ENCODE measurements at regions of chr13 and their contacts with region 1.

Region 1: GRCh38 chr13:112942689-112943308 is 26.2 kb upstream of the MCF2L start:
- DNase-seq: peak; percentile 89 to 98 (median 96)
- ATAC-seq: peak; percentile 99
- H3K4me3 ChIP-seq: peak overlapping the region; percentile 45 to 47
- H3K4me3 Mint-ChIP-seq: peak overlapping the region; percentile 89
- H3K27ac ChIP-seq: no peak overlapping the region
- H3K27ac Mint-ChIP-seq: no peak overlapping the region
- H3K4me1 ChIP-seq: peaks cover 9% of the 10 kb centered on the region
- H3K4me1 Mint-ChIP-seq: peaks cover 8% of the 10 kb centered on the region
- H3K27me3 ChIP-seq: peaks cover 0 to 12% of the 10 kb centered on the region in 2 experiments
- H3K27me3 Mint-ChIP-seq: peaks cover 24% of the 10 kb centered on the region
- CTCF ChIP-seq: peak; percentile 98

Region 2: GRCh38 chr13:112783135-112783977 is 159.4 kb before region 1 on chr13:
- CTCF ChIA-PET with region 1: no interaction called
- POLR2A ChIA-PET with region 1: no interaction called
- intact Hi-C with region 1: no loop called
- DNase-seq: peak in 1 of 9 experiments; percentile 42
- ATAC-seq: no peak
- H3K4me3 ChIP-seq: no peak overlapping the region
- H3K4me3 Mint-ChIP-seq: no peak overlapping the region
- H3K27ac ChIP-seq: no peak overlapping the region
- H3K27ac Mint-ChIP-seq: no peak overlapping the region
- H3K4me1 ChIP-seq: no peaks in the 10 kb centered on the region
- H3K4me1 Mint-ChIP-seq: peaks cover 8% of the 10 kb centered on the region
- H3K27me3 ChIP-seq: no peaks in the 10 kb centered on the region
- H3K27me3 Mint-ChIP-seq: no peaks in the 10 kb centered on the region
- CTCF ChIP-seq: no peak

Region 3: GRCh38 chr13:112893570-112894422 is 49.0 kb before region 1 on chr13:
- CTCF ChIA-PET with region 1: no interaction called
- POLR2A ChIA-PET with region 1: no interaction called
- intact Hi-C with region 1: no loop called
- DNase-seq: peak in 3 of 9 experiments; percentile 33 to 59 (median 45)
- ATAC-seq: peak; percentile 75
- H3K4me3 ChIP-seq: no peak overlapping the region
- H3K4me3 Mint-ChIP-seq: peak overlapping the region; percentile 43
- H3K27ac ChIP-seq: no peak overlapping the region
- H3K27ac Mint-ChIP-seq: no peak overlapping the region
- H3K4me1 ChIP-seq: peaks cover 20% of the 10 kb centered on the region
- H3K4me1 Mint-ChIP-seq: peaks cover 8% of the 10 kb centered on the region
- H3K27me3 ChIP-seq: peaks cover 0 to 17% of the 10 kb centered on the region in 2 experiments
- H3K27me3 Mint-ChIP-seq: peaks cover 5% of the 10 kb centered on the region
- CTCF ChIP-seq: no peak

Region 4: GRCh38 chr13:112968908-112969691 is 26.3 kb after region 1 on chr13 and contains the start of gene MCF2L:
- CTCF ChIA-PET with region 1: interaction called, 10 read pairs
- POLR2A ChIA-PET with region 1: no interaction called
- intact Hi-C with region 1: loop called (anchors 1 kb)
- DNase-seq: peak; percentile 31 to 83 (median 69)
- ATAC-seq: peak; percentile 75
- H3K4me3 ChIP-seq: peak within 1 kb of the TSS; percentile 63 to 66
- H3K4me3 Mint-ChIP-seq: peak within 1 kb of the TSS; percentile 96
- H3K27ac ChIP-seq: peak within 1 kb of the TSS; percentile 53 to 69
- H3K27ac Mint-ChIP-seq: peak within 1 kb of the TSS; percentile 95
- H3K4me1 ChIP-seq: peaks cover 23% of the 10 kb centered on the region
- H3K4me1 Mint-ChIP-seq: peaks cover 41% of the 10 kb centered on the region
- H3K27me3 ChIP-seq: no peaks in the 10 kb centered on the region
- H3K27me3 Mint-ChIP-seq: no peaks in the 10 kb centered on the region
- CTCF ChIP-seq: no peak
- total RNA-seq, gene MCF2L: 13.7 to 15.0 TPM

Region 5: DNA sequence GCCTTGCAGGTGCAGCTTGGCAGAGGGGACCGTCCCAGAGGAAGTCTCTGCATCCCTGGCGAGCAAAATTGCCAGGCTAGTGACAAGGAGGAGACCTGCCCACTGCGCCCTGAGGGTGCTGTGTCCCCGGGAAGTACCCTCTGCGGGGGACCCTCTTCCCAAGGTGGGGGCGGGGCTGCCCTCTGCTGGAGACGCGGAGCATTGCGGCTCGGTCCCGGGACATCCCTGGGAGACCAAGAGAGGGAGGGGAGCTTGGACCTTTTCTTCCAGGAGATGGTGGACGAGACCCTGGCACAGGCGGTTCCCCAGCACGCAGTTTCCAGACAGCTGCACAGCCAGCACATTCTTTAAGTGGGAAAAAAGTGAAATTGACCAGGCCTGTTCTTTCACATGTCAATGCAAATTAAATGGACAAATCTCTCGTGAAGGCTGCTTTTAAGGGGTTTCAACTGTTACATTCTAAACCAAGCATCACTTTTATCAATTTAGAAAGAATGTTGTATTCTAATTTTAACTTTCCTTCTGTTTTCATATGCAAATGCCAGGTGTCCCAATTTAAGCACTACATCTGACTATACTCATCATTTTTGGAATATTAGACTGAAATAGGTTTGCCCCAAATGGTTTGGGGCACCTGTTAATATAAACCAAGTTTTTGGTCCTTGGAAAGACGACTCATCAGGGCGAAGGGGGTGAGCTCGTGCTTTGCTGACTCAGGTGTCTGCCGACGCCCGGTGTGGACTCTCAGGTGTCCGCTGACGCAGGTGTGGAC is 86.9 kb after region 1 on chr13:
- CTCF ChIA-PET with region 1: interaction called, 38 read pairs
- POLR2A ChIA-PET with region 1: no interaction called
- intact Hi-C with region 1: loop called in 1 of 2 experiments (anchors 1 kb)
- DNase-seq: peak in 8 of 9 experiments; percentile 32 to 72 (median 57)
- ATAC-seq: peak; percentile 65
- H3K4me3 ChIP-seq: no peak overlapping the region
- H3K4me3 Mint-ChIP-seq: no peak overlapping the region
- H3K27ac ChIP-seq: no peak overlapping the region
- H3K27ac Mint-ChIP-seq: no peak overlapping the region
- H3K4me1 ChIP-seq: no peaks in the 10 kb centered on the region
- H3K4me1 Mint-ChIP-seq: no peaks in the 10 kb centered on the region
- H3K27me3 ChIP-seq: no peaks in the 10 kb centered on the region
- H3K27me3 Mint-ChIP-seq: no peaks in the 10 kb centered on the region
- CTCF ChIP-seq: peak; percentile 86

Region 6: GRCh38 chr13:113153810-113154748 is 211.3 kb after region 1 on chr13:
- CTCF ChIA-PET with region 1: no interaction called
- POLR2A ChIA-PET with region 1: no interaction called
- intact Hi-C with region 1: loop called in 1 of 2 experiments (anchors 5 kb)
- DNase-seq: peak; percentile 51 to 88 (median 75)
- ATAC-seq: peak; percentile 84
- H3K4me3 ChIP-seq: peak overlapping the region; percentile 52 to 56
- H3K4me3 Mint-ChIP-seq: peak overlapping the region; percentile 83
- H3K27ac ChIP-seq: peak overlapping the region; percentile 19 to 72
- H3K27ac Mint-ChIP-seq: peak overlapping the region; percentile 78
- H3K4me1 ChIP-seq: peaks cover 21% of the 10 kb centered on the region
- H3K4me1 Mint-ChIP-seq: peaks cover 17% of the 10 kb centered on the region
- H3K27me3 ChIP-seq: peaks cover 0 to 6% of the 10 kb centered on the region in 2 experiments
- H3K27me3 Mint-ChIP-seq: peaks cover 4% of the 10 kb centered on the region
- CTCF ChIP-seq: no peak

Region 7: GRCh38 chr13:113393563-113394338 is 451.0 kb after region 1 on chr13:
- CTCF ChIA-PET with region 1: interaction called, 7 read pairs
- POLR2A ChIA-PET with region 1: no interaction called
- intact Hi-C with region 1: loop called (anchors 1 kb)
- DNase-seq: peak; percentile 66 to 88 (median 81)
- ATAC-seq: peak; percentile 96
- H3K4me3 ChIP-seq: peak overlapping the region; percentile 61 to 67
- H3K4me3 Mint-ChIP-seq: peak overlapping the region; percentile 87
- H3K27ac ChIP-seq: no peak overlapping the region
- H3K27ac Mint-ChIP-seq: peak overlapping the region; percentile 72
- H3K4me1 ChIP-seq: peaks cover 8% of the 10 kb centered on the region
- H3K4me1 Mint-ChIP-seq: peaks cover 3% of the 10 kb centered on the region
- H3K27me3 ChIP-seq: no peaks in the 10 kb centered on the region
- H3K27me3 Mint-ChIP-seq: no peaks in the 10 kb centered on the region
- CTCF ChIP-seq: peak; percentile 77

Region 8: DNA sequence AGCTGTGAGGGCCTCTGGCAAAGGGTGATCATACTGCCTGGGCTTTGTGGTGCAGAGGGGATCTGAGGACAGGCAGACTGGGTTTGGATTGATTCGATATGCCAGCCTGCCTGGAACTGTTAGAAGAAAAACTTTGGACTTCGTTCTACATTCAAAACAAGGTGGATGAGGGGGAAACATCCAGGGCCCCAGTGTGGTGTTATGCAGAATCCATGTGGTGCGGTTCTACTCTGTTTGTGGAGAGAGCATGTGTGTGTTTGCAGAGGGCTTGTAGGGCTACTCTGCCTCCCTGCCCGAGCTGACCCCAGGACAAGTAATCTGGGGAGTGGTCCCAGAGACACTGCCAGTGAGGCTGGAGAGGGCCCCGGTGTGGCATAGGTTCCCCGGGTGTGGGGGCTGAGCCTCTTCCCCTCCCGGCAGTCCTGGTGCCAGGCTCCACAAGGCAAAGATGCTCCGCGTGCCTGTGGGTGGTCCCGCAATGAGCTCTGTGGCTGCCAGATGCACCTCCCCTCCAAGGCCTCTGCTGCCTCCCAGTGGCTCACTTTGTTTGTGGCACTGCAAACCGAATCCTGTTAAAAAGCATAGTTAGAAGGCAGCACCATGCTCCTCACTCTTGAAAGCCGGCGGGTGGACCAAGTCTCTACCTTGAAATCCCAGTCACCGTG is 619.4 kb after region 1 on chr13:
- CTCF ChIA-PET with region 1: interaction called, 4 read pairs
- POLR2A ChIA-PET with region 1: no interaction called
- intact Hi-C with region 1: loop called in 1 of 2 experiments (anchors 2 kb)
- DNase-seq: peak; percentile 17 to 63 (median 49)
- ATAC-seq: peak; percentile 72
- H3K4me3 ChIP-seq: no peak overlapping the region
- H3K4me3 Mint-ChIP-seq: no peak overlapping the region
- H3K27ac ChIP-seq: no peak overlapping the region
- H3K27ac Mint-ChIP-seq: no peak overlapping the region
- H3K4me1 ChIP-seq: no peaks in the 10 kb centered on the region
- H3K4me1 Mint-ChIP-seq: peaks cover 3% of the 10 kb centered on the region
- H3K27me3 ChIP-seq: no peaks in the 10 kb centered on the region
- H3K27me3 Mint-ChIP-seq: peaks cover 7% of the 10 kb centered on the region
- CTCF ChIP-seq: peak; percentile 56

Region 9: GRCh38 chr13:113981201-113981605 is 1038.4 kb after region 1 on chr13:
- CTCF ChIA-PET with region 1: no interaction called
- POLR2A ChIA-PET with region 1: no interaction called
- intact Hi-C with region 1: no loop called
- DNase-seq: peak in 1 of 9 experiments; percentile 14
- ATAC-seq: no peak
- H3K4me3 ChIP-seq: no peak overlapping the region
- H3K4me3 Mint-ChIP-seq: no peak overlapping the region
- H3K27ac ChIP-seq: no peak overlapping the region
- H3K27ac Mint-ChIP-seq: no peak overlapping the region
- H3K4me1 ChIP-seq: no peaks in the 10 kb centered on the region
- H3K4me1 Mint-ChIP-seq: no peaks in the 10 kb centered on the region
- H3K27me3 ChIP-seq: no peaks in the 10 kb centered on the region
- H3K27me3 Mint-ChIP-seq: no peaks in the 10 kb centered on the region
- CTCF ChIP-seq: no peak